Posterior vena cava (tissue), 2 donors: ENCODE measurements at regions of chr18 and their contacts with region 1.

Region 1: DNA sequence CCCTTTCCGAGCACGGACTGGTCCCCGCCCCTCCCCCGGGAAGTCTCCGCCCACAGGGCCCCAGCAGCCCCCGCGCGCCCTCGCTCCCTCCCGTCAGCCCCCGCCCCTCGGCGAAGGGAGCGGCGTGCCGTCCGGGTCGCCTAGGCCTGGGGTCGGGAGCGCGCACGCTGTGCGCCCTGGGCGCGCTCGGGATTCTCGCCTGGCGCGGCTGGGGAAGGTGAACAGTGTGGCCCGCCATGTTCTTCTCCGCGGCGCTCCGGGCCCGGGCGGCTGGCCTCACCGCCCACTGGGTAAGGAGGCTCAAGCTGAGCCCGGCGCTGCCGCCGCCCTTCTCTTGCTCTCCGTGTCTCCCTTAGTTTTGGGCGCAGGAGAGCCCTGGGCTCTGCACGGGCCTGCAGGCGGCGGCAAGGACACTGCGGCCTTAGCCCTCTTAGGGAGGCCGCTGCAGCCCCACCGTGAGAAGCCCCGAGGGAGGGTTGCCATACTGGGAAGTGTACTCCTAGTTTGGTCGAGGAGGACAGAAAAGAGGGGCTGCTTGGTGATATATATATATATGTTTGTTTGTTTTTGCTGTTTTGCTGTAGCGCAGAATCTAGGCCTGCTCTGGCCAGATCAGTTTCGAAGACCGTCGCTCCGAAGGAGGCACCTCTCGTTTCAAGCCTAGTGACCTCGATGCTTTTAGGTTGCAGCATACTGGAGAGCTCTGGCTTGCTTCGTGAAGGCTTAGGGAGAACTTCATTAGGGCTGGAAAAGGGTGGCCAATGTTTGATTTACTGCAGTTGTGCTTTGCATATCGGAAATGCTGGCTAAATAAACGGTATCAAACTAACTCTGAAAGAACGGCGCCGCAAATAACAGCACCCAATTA is at the start of gene NDUFV2:
- DNase-seq: peak; percentile 99
- total RNA-seq, gene NDUFV2: 117 to 151 TPM

Region 2: GRCh38 chr18:9082711-9083510 is 19.8 kb before region 1 on chr18:
- intact Hi-C with region 1: no loop called
- DNase-seq: no peak

Region 3: GRCh38 chr18:9136315-9137155 is 33.8 kb after region 1 on chr18 and contains the start of gene ANKRD12:
- intact Hi-C with region 1: loop called (anchors 2 to 5 kb)
- DNase-seq: peak; percentile 99
- total RNA-seq, gene ANKRD12: 81.0 to 91.9 TPM